SK-MEL-5 (cell line): ENCODE measurements at regions of chr2 and their contacts with region 1.

Region 1: DNA sequence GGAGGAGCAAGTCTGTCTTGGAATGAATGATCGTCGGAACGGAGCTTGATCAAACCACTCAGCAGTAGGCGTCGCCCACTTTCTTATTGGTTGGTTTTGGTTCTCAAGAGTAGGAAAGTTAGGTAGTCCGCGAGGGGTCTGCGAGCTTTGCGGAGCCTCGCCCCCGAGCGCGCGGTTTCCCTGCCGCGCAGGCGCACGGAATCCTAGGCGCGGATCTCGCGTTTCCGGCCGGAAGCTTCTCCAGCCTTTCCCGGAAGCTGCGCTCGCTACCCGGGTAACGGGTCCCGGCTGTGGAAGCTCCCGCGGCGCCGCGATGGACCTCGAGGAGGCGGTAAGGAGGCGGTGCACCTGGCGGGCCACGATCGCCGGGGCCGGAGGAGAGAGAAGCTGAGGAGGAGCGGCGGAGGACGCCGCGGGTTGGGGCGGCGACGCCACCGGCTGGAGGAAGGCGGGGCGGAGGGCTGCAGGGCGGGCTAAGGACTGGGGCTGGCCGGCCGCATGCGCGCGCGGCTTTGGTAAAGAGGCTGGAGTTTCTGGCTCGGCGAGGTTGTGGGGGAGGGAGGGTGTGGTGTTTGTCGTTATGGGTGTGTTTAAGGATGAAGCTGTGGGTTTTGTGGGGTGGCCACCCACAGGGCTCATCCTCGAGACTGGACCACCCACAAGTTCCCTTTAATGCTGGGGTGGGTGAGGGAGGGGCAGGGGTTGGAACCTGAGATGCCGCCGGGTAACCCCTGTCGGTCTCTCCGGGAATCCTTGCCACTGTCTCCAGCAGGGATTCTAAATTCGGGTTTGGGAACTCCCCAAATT is at the start of gene TAF1B:
- DNase-seq: peak; percentile 94
- total RNA-seq, gene TAF1B: 25.6 and 26.7 TPM in 2 replicates

Region 2: GRCh38 chr2:9739531-9739964 is 103.9 kb before region 1 on chr2:
- in situ Hi-C with region 1: no loop called
- DNase-seq: no peak

Region 3: DNA sequence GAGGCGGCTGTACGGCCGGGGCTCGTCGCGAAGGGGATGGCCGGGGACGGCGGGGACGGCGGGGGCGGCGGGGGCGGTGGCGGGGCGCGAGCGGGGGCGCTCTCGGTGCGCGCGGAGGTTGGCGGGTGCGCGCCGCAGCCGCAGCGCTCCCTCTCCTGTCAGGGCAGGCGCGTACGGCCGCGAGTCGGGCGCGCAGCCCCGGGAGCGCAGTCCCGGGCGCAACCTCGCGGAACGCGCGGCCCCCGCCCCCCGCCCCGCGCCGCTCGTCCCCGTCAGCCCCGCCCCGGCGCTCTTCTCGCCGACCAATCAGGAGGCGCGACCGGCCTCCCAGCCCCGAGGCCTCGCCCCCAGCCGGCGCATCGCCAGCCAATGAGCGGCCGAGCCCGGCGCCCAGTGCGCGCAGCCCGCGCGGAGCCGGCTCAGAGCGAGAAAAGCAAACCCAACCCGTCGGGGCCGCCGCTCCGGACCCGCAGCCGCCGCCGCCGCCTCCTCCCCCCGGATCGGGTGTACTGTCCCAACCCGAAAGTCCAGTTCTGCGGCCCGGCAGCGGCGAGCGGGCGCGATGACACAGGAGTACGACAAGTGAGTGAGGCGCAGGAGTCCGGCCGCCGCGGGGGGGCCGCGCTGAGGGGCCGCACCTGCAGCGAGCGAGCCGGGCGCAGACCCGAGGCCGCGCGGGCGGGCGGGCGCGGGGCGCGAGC is 108.0 kb after region 1 on chr2 and contains the start of gene GRHL1:
- in situ Hi-C with region 1: loop called (anchors 25 kb)
- DNase-seq: peak; percentile 94
- total RNA-seq, gene GRHL1: 1.9 and 2.1 TPM in 2 replicates